HCT116 (cell line): ENCODE measurements at regions of chr3 and their contacts with region 1.

Region 1: GRCh38 chr3:158261371-158261979 is 151.6 kb downstream of the RSRC1 start:
- DNase-seq: no peak
- ATAC-seq: no peak
- H3K4me3 ChIP-seq: no peak overlapping the region
- H3K27ac ChIP-seq: no peak overlapping the region
- H3K4me1 ChIP-seq: no peaks in the 10 kb centered on the region
- H3K27me3 ChIP-seq: no peaks in the 10 kb centered on the region
- CTCF ChIP-seq: no peak
- POLR2A ChIP-seq: no peak
- RAD21 ChIP-seq: no peak

Region 2: DNA sequence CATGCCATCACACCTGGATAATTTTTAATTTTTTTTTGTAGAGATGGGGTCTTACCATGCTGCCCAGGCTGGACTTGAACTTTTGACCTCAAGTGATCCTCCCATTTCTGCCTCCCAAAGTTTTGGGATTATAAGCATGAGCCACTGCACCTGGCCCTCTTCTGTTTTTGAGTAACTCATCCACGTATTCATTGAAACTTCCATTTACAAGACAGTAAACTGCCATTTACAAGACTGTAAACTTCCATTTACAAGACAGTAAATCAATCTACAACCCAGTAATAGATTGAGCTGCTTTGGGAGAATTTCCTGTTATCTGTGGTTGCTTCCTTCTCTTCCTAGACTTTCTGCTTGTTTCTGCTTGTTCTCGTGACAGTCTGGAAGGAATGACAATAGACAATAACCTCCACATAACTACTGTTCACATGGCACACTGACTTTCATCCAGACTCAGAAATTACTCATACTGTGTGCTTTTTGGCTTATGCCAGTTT is 986.8 kb before region 1 on chr3:
- CTCF ChIA-PET with region 1: no interaction called
- POLR2A ChIA-PET with region 1: no interaction called
- RAD21 ChIA-PET with region 1: no interaction called
- intact Hi-C with region 1: no loop called
- DNase-seq: no peak
- ATAC-seq: no peak
- H3K4me3 ChIP-seq: no peak overlapping the region
- H3K27ac ChIP-seq: no peak overlapping the region
- H3K4me1 ChIP-seq: no peaks in the 10 kb centered on the region
- H3K27me3 ChIP-seq: no peaks in the 10 kb centered on the region
- CTCF ChIP-seq: no peak
- POLR2A ChIP-seq: no peak
- RAD21 ChIP-seq: no peak

Region 3: DNA sequence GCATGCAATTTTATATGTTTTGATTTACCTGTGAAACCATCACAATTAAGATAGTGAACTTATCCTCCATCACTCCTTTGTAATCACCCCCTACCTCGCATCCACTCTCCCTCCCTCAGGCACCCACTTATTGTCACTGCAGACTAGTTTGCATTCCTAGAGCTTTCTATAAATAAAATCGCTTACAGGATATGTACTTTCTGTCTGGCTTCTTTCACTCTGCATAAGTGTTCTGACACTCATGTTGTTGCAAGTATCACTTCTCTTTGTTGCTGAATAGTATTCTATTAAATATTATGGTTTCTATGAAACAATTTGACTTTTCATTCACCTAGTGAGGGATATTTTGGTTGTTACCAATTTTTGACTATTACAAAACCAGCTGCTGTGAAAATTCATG is 12.3 kb before region 1 on chr3:
- CTCF ChIA-PET with region 1: no interaction called
- POLR2A ChIA-PET with region 1: no interaction called
- RAD21 ChIA-PET with region 1: no interaction called
- intact Hi-C with region 1: loop called (anchors 1 kb)
- DNase-seq: no peak
- ATAC-seq: no peak
- H3K4me3 ChIP-seq: no peak overlapping the region
- H3K27ac ChIP-seq: no peak overlapping the region
- H3K4me1 ChIP-seq: no peaks in the 10 kb centered on the region
- H3K27me3 ChIP-seq: no peaks in the 10 kb centered on the region
- CTCF ChIP-seq: no peak
- POLR2A ChIP-seq: no peak
- RAD21 ChIP-seq: no peak